ENCODE measurements at regions of chr11 and their contacts with region 1.

Region 1: GRCh38 chr11:62627714-62628113 is 5.9 kb upstream of the B3GAT3 start:
- DNase-seq: no peak
- H3K4me3 Mint-ChIP-seq: no peak overlapping the region
- H3K27ac Mint-ChIP-seq: no peak overlapping the region
- H3K4me1 Mint-ChIP-seq: no peaks in the 10 kb centered on the region
- H3K27me3 Mint-ChIP-seq: no peaks in the 10 kb centered on the region

Region 2: GRCh38 chr11:62508268-62509058 is 119.3 kb before region 1 on chr11:
- CTCF ChIA-PET with region 1: no interaction called
- POLR2A ChIA-PET with region 1: no interaction called
- DNase-seq: no peak
- H3K4me3 Mint-ChIP-seq: no peak overlapping the region
- H3K27ac Mint-ChIP-seq: no peak overlapping the region
- H3K4me1 Mint-ChIP-seq: peaks cover 5% of the 10 kb centered on the region
- H3K27me3 Mint-ChIP-seq: peaks cover 2% of the 10 kb centered on the region

Region 3: GRCh38 chr11:62645956-62646824 is 18.5 kb after region 1 on chr11 and contains the start of gene GANAB:
- CTCF ChIA-PET with region 1: interaction called, 12 read pairs
- POLR2A ChIA-PET with region 1: interaction called, 8 read pairs
- DNase-seq: peak; percentile 99
- H3K4me3 Mint-ChIP-seq: peak within 1 kb of the TSS; percentile 99
- H3K27ac Mint-ChIP-seq: peak within 1 kb of the TSS; percentile 94
- H3K4me1 Mint-ChIP-seq: peaks cover 47% of the 10 kb centered on the region
- H3K27me3 Mint-ChIP-seq: no peaks in the 10 kb centered on the region
- total RNA-seq, gene GANAB: 278 to 284 TPM